Common myeloid progenitor, CD34-positive (primary cell): ENCODE measurements at regions of chr5 and their contacts with region 1.

Region 1: DNA sequence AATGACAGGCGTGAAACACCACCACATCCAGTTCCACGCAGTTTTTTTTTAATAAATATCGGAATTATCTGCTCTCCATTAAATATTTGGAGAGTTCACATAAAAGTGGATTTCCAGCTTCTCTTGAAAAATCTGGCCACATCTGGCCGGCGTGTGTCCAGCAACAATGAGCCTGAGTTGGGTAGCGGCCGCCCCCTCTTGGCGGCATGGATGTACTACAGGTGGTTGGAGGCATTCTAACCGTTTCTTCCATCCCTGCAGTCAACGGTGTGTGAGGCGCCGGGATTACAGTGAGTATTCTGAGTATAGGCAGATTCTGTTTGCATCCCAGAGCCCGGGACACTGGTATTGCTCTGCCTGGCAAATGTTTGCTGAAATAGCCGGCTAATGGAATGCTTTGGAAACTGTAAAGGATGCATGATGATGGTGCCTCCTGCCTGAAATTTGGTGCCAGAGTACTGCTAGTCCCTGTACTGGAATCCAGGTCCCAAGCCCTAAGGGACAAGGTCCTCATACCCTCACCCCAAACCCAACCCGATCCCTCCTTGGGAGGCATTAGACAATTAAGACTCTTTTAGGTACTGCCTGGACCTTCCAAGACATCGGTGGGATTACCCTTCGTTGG is 13.6 kb upstream of the GM2A start:
- DNase-seq: peak in 1 of 3 donors; percentile 31
- H3K4me3 ChIP-seq: no peak overlapping the region
- H3K27ac ChIP-seq: no peak overlapping the region
- H3K4me1 ChIP-seq: peaks cover 3 to 14% (median 12%) of the 10 kb centered on the region in 4 experiments
- H3K27me3 ChIP-seq: no peaks in the 10 kb centered on the region

Region 2: DNA sequence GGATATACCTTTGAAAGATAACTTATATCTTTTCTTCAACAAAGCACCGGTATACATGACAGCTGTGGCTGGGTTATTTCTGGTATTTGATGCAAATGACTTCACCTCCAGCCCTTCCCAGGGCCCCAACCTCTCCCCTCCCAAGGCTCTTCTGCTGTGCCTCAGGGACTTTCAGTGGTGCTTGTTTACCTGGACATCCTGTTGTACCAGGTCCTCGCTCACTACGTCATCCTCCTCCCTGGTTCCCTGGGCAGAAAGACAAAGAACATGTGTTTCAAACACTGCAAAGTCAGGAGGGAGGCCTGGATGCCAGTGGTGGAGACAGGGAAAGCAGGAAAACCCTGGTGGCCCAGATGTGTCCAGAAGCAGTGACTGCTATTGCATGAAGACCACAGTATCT is 105.1 kb before region 1 on chr5:
- CTCF ChIA-PET with region 1: interaction called, 10 read pairs
- POLR2A ChIA-PET with region 1: no interaction called
- DNase-seq: no peak
- H3K4me3 ChIP-seq: no peak overlapping the region
- H3K27ac ChIP-seq: no peak overlapping the region
- H3K4me1 ChIP-seq: peaks cover 0 to 2% (median 0%) of the 10 kb centered on the region in 4 experiments
- H3K27me3 ChIP-seq: no peaks in the 10 kb centered on the region

Region 3: GRCh38 chr5:151150471-151151262 is 88.7 kb before region 1 on chr5:
- CTCF ChIA-PET with region 1: interaction called, 10 read pairs
- POLR2A ChIA-PET with region 1: no interaction called
- DNase-seq: peak; percentile 47 to 88 (median 80)
- H3K4me3 ChIP-seq: peak overlapping the region in 5 of 7 experiments; percentile 7 to 60 (median 37)
- H3K27ac ChIP-seq: peak overlapping the region; percentile 66 to 85
- H3K4me1 ChIP-seq: peaks cover 30 to 89% (median 77%) of the 10 kb centered on the region in 4 experiments
- H3K27me3 ChIP-seq: no peaks in the 10 kb centered on the region

Region 4: DNA sequence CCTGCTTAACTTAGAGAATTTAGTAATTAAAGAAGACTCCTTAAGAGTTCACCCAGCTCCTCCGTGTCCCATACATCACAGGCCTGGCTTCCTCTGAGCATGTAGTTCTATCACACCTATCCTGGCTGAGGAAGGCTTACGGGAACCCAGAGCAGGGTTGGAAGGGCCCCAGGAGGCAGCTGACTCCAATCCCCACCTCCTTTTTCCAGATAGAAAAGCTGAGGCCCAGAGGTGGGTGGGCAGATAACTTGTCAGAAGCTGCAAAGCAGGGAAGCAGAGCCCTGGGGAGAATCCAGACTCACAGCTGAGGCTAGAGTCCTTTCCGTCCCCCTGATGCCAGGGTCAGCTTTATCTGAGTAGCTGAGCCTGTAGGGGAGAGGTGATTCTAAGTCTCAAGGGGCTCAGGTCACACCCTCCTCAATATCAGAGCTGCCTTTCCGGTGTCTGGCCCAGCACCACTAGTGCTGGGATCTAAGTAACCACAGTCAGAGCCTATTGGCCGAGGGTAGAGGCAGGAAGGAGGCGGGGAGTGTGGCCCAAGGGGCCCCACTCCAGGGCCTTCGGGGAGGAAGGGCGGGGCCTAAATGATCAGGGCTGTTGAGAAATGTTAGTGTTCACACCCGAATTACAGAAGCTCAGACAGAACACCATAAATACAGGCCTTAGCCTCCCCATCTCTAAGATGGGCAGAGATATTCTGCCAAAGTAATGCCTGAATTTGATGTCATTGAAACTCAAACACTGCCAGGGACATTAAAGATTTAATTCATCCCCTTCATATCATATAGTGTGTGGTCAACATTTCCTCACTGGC is 25.3 kb before region 1 on chr5:
- CTCF ChIA-PET with region 1: interaction called, 24 read pairs
- POLR2A ChIA-PET with region 1: interaction called, 6 read pairs
- DNase-seq: peak; percentile 86 to 95 (median 93)
- H3K4me3 ChIP-seq: peak overlapping the region in 6 of 7 experiments; percentile 22 to 64 (median 42)
- H3K27ac ChIP-seq: peak overlapping the region; percentile 66 to 85
- H3K4me1 ChIP-seq: peaks cover 34 to 76% (median 63%) of the 10 kb centered on the region in 4 experiments
- H3K27me3 ChIP-seq: no peaks in the 10 kb centered on the region

Region 5: GRCh38 chr5:151223469-151224264 is 15.7 kb before region 1 on chr5 and contains the start of gene CCDC69:
- CTCF ChIA-PET with region 1: interaction called, 32 read pairs
- POLR2A ChIA-PET with region 1: interaction called, 11 read pairs
- DNase-seq: peak; percentile 63 to 76 (median 63)
- H3K4me3 ChIP-seq: peak within 1 kb of the TSS; percentile 79 to 92 (median 89)
- H3K27ac ChIP-seq: peak within 1 kb of the TSS in 1 of 2 experiments; percentile 78
- H3K4me1 ChIP-seq: peaks cover 9 to 51% (median 39%) of the 10 kb centered on the region in 4 experiments
- H3K27me3 ChIP-seq: no peaks in the 10 kb centered on the region

Region 6: GRCh38 chr5:151252762-151253604 is 13.6 kb after region 1 on chr5 and contains the start of gene GM2A:
- CTCF ChIA-PET with region 1: interaction called, 22 read pairs
- POLR2A ChIA-PET with region 1: interaction called, 4 read pairs
- DNase-seq: peak; percentile 99
- H3K4me3 ChIP-seq: peak within 1 kb of the TSS; percentile 78 to 94 (median 86)
- H3K27ac ChIP-seq: peak within 1 kb of the TSS in 1 of 2 experiments; percentile 80
- H3K4me1 ChIP-seq: peaks cover 10 to 53% (median 27%) of the 10 kb centered on the region in 4 experiments
- H3K27me3 ChIP-seq: no peaks in the 10 kb centered on the region

Region 7: GRCh38 chr5:151345808-151346478 is 106.6 kb after region 1 on chr5:
- CTCF ChIA-PET with region 1: no interaction called
- POLR2A ChIA-PET with region 1: no interaction called
- DNase-seq: no peak
- H3K4me3 ChIP-seq: no peak overlapping the region
- H3K27ac ChIP-seq: no peak overlapping the region
- H3K4me1 ChIP-seq: no peaks in the 10 kb centered on the region
- H3K27me3 ChIP-seq: peaks cover 4 to 76% (median 30%) of the 10 kb centered on the region in 5 experiments